ENCODE measurements at regions of chr2 and their contacts with region 1.

Region 1: GRCh38 chr2:165601928-165602521 is 132.5 kb downstream of the CSRNP3 start:
- DNase-seq: no peak
- CTCF ChIP-seq: no peak

Region 2: GRCh38 chr2:165587335-165587938 is 14.6 kb before region 1 on chr2:
- CTCF ChIA-PET with region 1: interaction called, 12 read pairs
- POLR2A ChIA-PET with region 1: no interaction called
- DNase-seq: peak; percentile 19
- CTCF ChIP-seq: no peak